ENCODE measurements at regions of chr3 and their contacts with region 1.

Region 1: GRCh38 chr3:188339410-188340295 is 185.7 kb downstream of the LPP start:
- DNase-seq: peak; percentile 76
- ATAC-seq: peak; percentile 89
- H3K4me3 Mint-ChIP-seq: peak overlapping the region; percentile 54
- H3K27ac Mint-ChIP-seq: peak overlapping the region; percentile 95
- H3K4me1 Mint-ChIP-seq: peaks cover 43% of the 10 kb centered on the region
- H3K27me3 Mint-ChIP-seq: no peaks in the 10 kb centered on the region

Region 2: GRCh38 chr3:187745201-187746058 is 594.2 kb before region 1 on chr3 and contains the start of gene BCL6:
- CTCF ChIA-PET with region 1: interaction called, 13 read pairs
- POLR2A ChIA-PET with region 1: interaction called, 10 read pairs
- intact Hi-C with region 1: loop called (anchors 1 kb)
- DNase-seq: peak; percentile 92
- ATAC-seq: peak; percentile 50
- H3K4me3 Mint-ChIP-seq: peak within 1 kb of the TSS; percentile 91
- H3K27ac Mint-ChIP-seq: peak within 1 kb of the TSS; percentile 99
- H3K4me1 Mint-ChIP-seq: peaks cover 63% of the 10 kb centered on the region
- H3K27me3 Mint-ChIP-seq: no peaks in the 10 kb centered on the region
- total RNA-seq, gene BCL6: 42.9 to 52.8 TPM

Region 3: GRCh38 chr3:187902041-187902471 is 437.6 kb before region 1 on chr3:
- CTCF ChIA-PET with region 1: no interaction called
- POLR2A ChIA-PET with region 1: no interaction called
- intact Hi-C with region 1: no loop called
- DNase-seq: no peak
- ATAC-seq: no peak
- H3K4me3 Mint-ChIP-seq: no peak overlapping the region
- H3K27ac Mint-ChIP-seq: no peak overlapping the region
- H3K4me1 Mint-ChIP-seq: peaks cover 6% of the 10 kb centered on the region
- H3K27me3 Mint-ChIP-seq: no peaks in the 10 kb centered on the region

Region 4: GRCh38 chr3:188257384-188258026 is 82.1 kb before region 1 on chr3:
- CTCF ChIA-PET with region 1: no interaction called
- POLR2A ChIA-PET with region 1: interaction called, 5 read pairs
- intact Hi-C with region 1: loop called in 1 of 2 experiments (anchors 1 kb)
- DNase-seq: no peak
- ATAC-seq: peak; percentile 12
- H3K4me3 Mint-ChIP-seq: no peak overlapping the region
- H3K27ac Mint-ChIP-seq: peak overlapping the region; percentile 62
- H3K4me1 Mint-ChIP-seq: peaks cover 46% of the 10 kb centered on the region
- H3K27me3 Mint-ChIP-seq: no peaks in the 10 kb centered on the region

Region 5: GRCh38 chr3:188309437-188310269 is 30.0 kb before region 1 on chr3:
- CTCF ChIA-PET with region 1: no interaction called
- POLR2A ChIA-PET with region 1: no interaction called
- intact Hi-C with region 1: loop called (anchors 1 kb)
- DNase-seq: peak; percentile 50
- ATAC-seq: peak; percentile 85
- H3K4me3 Mint-ChIP-seq: peak overlapping the region; percentile 9
- H3K27ac Mint-ChIP-seq: peak overlapping the region; percentile 80
- H3K4me1 Mint-ChIP-seq: peaks cover 26% of the 10 kb centered on the region
- H3K27me3 Mint-ChIP-seq: no peaks in the 10 kb centered on the region

Region 6: GRCh38 chr3:188400494-188401243 is 61.0 kb after region 1 on chr3:
- CTCF ChIA-PET with region 1: no interaction called
- POLR2A ChIA-PET with region 1: no interaction called
- intact Hi-C with region 1: loop called (anchors 2 to 5 kb)
- DNase-seq: peak; percentile 46
- ATAC-seq: peak; percentile 85
- H3K4me3 Mint-ChIP-seq: no peak overlapping the region
- H3K27ac Mint-ChIP-seq: peak overlapping the region; percentile 26
- H3K4me1 Mint-ChIP-seq: peaks cover 69% of the 10 kb centered on the region
- H3K27me3 Mint-ChIP-seq: no peaks in the 10 kb centered on the region

Region 7: DNA sequence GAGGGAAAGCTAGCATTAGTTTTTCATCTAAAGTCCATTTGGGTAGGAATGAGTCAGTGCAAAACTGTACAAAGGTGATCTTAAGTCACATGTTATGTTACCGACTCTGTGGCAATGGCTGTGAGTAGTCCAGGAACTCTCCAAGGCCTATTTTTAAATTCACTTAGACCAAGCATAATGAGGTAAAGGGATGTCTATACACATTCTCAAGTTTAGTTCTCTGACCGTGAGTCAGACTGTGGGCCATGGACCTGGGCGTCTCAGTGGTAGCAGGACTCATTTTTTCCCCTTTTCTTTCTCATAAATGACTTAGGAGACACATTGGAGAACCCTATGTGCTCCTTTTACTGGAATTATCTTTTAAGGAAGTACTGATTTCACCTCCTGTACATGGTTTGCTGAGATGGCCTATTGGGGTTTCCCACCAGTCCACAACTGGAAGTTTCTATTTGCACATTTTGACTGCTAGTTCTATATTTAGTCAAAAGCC is 343.4 kb after region 1 on chr3:
- CTCF ChIA-PET with region 1: no interaction called
- POLR2A ChIA-PET with region 1: no interaction called
- intact Hi-C with region 1: loop called (anchors 1 kb)
- DNase-seq: peak; percentile 69
- ATAC-seq: peak; percentile 97
- H3K4me3 Mint-ChIP-seq: no peak overlapping the region
- H3K27ac Mint-ChIP-seq: no peak overlapping the region
- H3K4me1 Mint-ChIP-seq: peaks cover 41% of the 10 kb centered on the region
- H3K27me3 Mint-ChIP-seq: no peaks in the 10 kb centered on the region

Region 8: GRCh38 chr3:189148081-189148507 is 808.4 kb after region 1 on chr3:
- CTCF ChIA-PET with region 1: no interaction called
- POLR2A ChIA-PET with region 1: no interaction called
- intact Hi-C with region 1: loop called in 1 of 2 experiments (anchors 10 kb)
- DNase-seq: peak; percentile 81
- ATAC-seq: peak; percentile 66
- H3K4me3 Mint-ChIP-seq: no peak overlapping the region
- H3K27ac Mint-ChIP-seq: no peak overlapping the region
- H3K4me1 Mint-ChIP-seq: peaks cover 17% of the 10 kb centered on the region
- H3K27me3 Mint-ChIP-seq: peaks cover 3% of the 10 kb centered on the region